Heart right ventricle (tissue), 16 donors: ENCODE measurements at regions of chr1 and their contacts with region 1.

Region 1: DNA sequence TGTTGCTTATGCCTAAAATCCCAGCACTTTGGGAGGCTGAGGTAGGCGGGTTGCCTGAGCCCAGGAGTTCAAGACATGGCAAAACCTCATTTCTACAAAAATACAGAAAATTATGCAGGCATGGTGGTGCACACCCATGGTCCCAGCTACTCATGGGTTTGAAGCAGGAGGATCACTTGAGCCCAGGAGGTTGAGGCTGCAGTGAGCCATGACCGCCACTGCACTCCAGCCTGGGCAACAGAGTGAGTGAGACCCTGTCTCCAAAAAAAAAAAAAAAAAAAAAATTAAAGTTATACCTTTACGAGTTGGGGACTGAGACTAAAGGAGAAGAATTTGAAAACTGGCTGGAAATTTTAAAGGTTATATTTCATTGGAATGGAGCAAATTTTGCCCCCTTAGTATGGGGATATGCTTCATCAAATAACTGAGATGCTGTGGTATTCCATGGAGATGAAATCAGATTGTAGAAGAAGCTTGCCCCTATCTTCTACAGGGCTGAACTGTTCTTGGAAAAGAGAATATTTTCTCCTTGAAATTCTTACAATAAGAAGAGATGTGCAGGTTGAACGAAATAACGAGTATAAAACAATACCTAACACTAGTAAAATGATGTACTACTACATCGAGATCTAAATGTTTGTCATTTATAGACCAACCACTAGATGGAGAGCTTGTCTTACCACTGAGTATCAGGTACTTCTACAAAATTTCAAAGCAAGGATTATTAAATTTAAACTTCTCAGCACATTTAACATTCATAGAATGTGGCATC is 34.9 kb upstream of the SCYL3 start:
- DNase-seq: no peak
- ATAC-seq: peak in 2 of 8 donors; percentile 56 to 61
- H3K4me3 ChIP-seq: no peak overlapping the region
- H3K27ac ChIP-seq: no peak overlapping the region
- H3K4me1 ChIP-seq: peaks cover 0 to 16% (median 7%) of the 10 kb centered on the region in 9 donors
- H3K27me3 ChIP-seq: no peaks in the 10 kb centered on the region
- CTCF ChIP-seq: peak; percentile 45 to 86 (median 74)

Region 2: GRCh38 chr1:169844941-169845608 is 83.5 kb before region 1 on chr1:
- intact Hi-C with region 1: no loop called
- DNase-seq: no peak
- ATAC-seq: no peak
- H3K4me3 ChIP-seq: no peak overlapping the region
- H3K27ac ChIP-seq: no peak overlapping the region
- H3K4me1 ChIP-seq: peaks cover 0 to 7% (median 0%) of the 10 kb centered on the region in 9 donors
- H3K27me3 ChIP-seq: no peaks in the 10 kb centered on the region
- CTCF ChIP-seq: no peak

Region 3: DNA sequence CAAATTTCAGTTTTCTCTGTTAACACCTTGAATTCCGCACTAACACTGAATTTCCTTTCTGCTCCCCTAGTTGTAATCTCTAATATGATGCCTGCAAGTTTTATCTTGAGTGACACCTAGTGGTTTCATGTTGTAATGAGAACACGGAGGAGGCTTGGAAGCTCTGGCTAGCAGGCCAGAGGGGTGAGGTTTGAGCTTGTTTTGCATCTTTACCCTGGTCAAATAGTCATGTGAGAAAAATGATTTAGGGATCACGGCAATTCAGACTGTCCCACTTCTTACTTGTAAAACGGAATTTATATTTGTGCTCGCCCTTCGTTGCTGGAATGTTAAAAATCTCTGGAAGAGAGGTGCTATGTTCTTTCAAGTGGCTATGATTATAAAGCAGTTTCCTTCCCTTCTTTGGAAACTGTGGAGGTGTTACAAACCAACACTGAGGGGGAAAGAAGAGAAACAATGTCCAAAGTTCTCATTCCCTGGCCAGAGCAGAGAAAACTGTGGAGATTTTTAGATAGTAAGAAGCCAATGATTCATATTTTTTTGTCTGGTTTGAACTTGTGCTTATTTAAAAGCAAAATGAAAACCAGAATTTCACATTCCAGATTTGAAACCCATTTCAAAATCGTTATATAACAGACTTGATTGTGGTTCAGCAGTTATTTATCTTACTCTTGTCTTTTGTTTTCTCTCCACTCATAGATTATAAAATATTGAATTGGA is 1001.4 kb after region 1 on chr1:
- intact Hi-C with region 1: loop called in 4 of 10 experiments (anchors 5 to 10 kb)
- DNase-seq: peak in 1 of 2 donors; percentile 6
- ATAC-seq: peak; percentile 69 to 94 (median 92)
- H3K4me3 ChIP-seq: peak overlapping the region in 2 of 10 donors; percentile 9 to 17
- H3K27ac ChIP-seq: peak overlapping the region in 6 of 10 donors; percentile 8 to 55 (median 44)
- H3K4me1 ChIP-seq: peaks cover 0 to 17% (median 7%) of the 10 kb centered on the region in 9 donors
- H3K27me3 ChIP-seq: no peaks in the 10 kb centered on the region
- CTCF ChIP-seq: peak; percentile 46 to 84 (median 73)